B cell (primary cell): ENCODE measurements at regions of chr2 and their contacts with region 1.

Region 1: GRCh38 chr2:101419096-101419663 is 31.9 kb upstream of the CREG2 start:
- DNase-seq: peak; percentile 78
- ATAC-seq: peak; percentile 82
- H3K4me3 ChIP-seq: no peak overlapping the region
- H3K4me3 Mint-ChIP-seq: no peak overlapping the region
- H3K27ac ChIP-seq: no peak overlapping the region
- H3K27ac Mint-ChIP-seq: no peak overlapping the region
- H3K4me1 ChIP-seq: no peaks in the 10 kb centered on the region
- H3K4me1 Mint-ChIP-seq: no peaks in the 10 kb centered on the region
- H3K27me3 ChIP-seq: peaks cover 0 to 5% (median 0%) of the 10 kb centered on the region in 4 experiments
- H3K27me3 Mint-ChIP-seq: peaks cover 8% of the 10 kb centered on the region
- CTCF ChIP-seq: peak; percentile 88

Region 2: DNA sequence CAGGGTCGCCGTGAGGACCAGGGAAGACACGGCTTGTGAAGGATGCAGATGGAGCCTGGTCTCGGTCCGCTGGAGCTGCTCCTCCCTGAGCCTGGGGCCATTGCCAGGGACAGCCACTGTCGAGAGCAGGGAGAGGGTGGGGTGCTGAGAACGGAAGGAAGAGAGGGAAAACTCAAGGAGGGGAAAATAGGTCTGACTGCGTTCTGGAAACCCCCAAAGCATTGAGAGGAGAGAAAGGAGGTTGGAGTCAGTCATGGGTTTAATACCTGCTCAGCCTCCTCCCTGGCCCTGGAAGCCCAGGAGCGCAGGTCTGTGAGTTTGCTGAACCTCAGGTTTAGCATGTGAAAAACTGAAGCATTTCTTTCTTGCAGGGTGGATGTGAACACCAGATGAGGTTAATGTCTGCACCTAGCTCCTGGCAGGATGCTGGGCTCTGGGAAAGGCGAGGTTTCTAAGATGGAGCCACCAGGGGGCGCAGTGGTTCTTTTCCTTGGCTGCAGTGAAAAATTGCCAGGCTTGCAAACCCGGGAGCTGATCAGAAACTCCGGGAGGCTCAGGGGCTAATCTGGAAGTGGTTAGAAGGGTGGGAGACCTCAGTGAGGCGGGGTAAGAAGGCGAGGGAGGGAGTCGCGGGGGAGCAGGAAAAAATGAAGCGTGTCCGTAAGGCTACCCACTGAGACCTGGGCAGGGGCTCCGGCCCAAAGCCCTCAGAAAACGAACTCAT is 77.1 kb before region 1 on chr2:
- CTCF ChIA-PET with region 1: interaction called, 13 read pairs
- POLR2A ChIA-PET with region 1: no interaction called
- intact Hi-C with region 1: loop called (anchors 1 kb)
- DNase-seq: peak; percentile 73
- ATAC-seq: peak; percentile 56
- H3K4me3 ChIP-seq: no peak overlapping the region
- H3K4me3 Mint-ChIP-seq: no peak overlapping the region
- H3K27ac ChIP-seq: no peak overlapping the region
- H3K27ac Mint-ChIP-seq: no peak overlapping the region
- H3K4me1 ChIP-seq: peaks cover 0 to 8% of the 10 kb centered on the region in 2 donors
- H3K4me1 Mint-ChIP-seq: peaks cover 7% of the 10 kb centered on the region
- H3K27me3 ChIP-seq: no peaks in the 10 kb centered on the region
- H3K27me3 Mint-ChIP-seq: peaks cover 2% of the 10 kb centered on the region
- CTCF ChIP-seq: peak; percentile 90

Region 3: GRCh38 chr2:101371636-101372035 is 47.5 kb before region 1 on chr2:
- CTCF ChIA-PET with region 1: no interaction called
- POLR2A ChIA-PET with region 1: no interaction called
- intact Hi-C with region 1: no loop called
- DNase-seq: no peak
- ATAC-seq: no peak
- H3K4me3 ChIP-seq: no peak overlapping the region
- H3K4me3 Mint-ChIP-seq: no peak overlapping the region
- H3K27ac ChIP-seq: no peak overlapping the region
- H3K27ac Mint-ChIP-seq: no peak overlapping the region
- H3K4me1 ChIP-seq: no peaks in the 10 kb centered on the region
- H3K4me1 Mint-ChIP-seq: no peaks in the 10 kb centered on the region
- H3K27me3 ChIP-seq: no peaks in the 10 kb centered on the region
- H3K27me3 Mint-ChIP-seq: peaks cover 7% of the 10 kb centered on the region
- CTCF ChIP-seq: no peak

Region 4: GRCh38 chr2:101400048-101400447 is 19.1 kb before region 1 on chr2:
- CTCF ChIA-PET with region 1: interaction called, 23 read pairs
- POLR2A ChIA-PET with region 1: no interaction called
- intact Hi-C with region 1: no loop called
- DNase-seq: peak; percentile 60
- ATAC-seq: peak; percentile 40
- H3K4me3 ChIP-seq: peak overlapping the region in 1 of 5 experiments; percentile 23
- H3K4me3 Mint-ChIP-seq: peak overlapping the region; percentile 78
- H3K27ac ChIP-seq: peak overlapping the region in 1 of 2 donors; percentile 50
- H3K27ac Mint-ChIP-seq: peak overlapping the region; percentile 89
- H3K4me1 ChIP-seq: peaks cover 53 to 62% of the 10 kb centered on the region in 2 donors
- H3K4me1 Mint-ChIP-seq: peaks cover 52% of the 10 kb centered on the region
- H3K27me3 ChIP-seq: no peaks in the 10 kb centered on the region
- H3K27me3 Mint-ChIP-seq: peaks cover 8% of the 10 kb centered on the region
- CTCF ChIP-seq: no peak

Region 5: DNA sequence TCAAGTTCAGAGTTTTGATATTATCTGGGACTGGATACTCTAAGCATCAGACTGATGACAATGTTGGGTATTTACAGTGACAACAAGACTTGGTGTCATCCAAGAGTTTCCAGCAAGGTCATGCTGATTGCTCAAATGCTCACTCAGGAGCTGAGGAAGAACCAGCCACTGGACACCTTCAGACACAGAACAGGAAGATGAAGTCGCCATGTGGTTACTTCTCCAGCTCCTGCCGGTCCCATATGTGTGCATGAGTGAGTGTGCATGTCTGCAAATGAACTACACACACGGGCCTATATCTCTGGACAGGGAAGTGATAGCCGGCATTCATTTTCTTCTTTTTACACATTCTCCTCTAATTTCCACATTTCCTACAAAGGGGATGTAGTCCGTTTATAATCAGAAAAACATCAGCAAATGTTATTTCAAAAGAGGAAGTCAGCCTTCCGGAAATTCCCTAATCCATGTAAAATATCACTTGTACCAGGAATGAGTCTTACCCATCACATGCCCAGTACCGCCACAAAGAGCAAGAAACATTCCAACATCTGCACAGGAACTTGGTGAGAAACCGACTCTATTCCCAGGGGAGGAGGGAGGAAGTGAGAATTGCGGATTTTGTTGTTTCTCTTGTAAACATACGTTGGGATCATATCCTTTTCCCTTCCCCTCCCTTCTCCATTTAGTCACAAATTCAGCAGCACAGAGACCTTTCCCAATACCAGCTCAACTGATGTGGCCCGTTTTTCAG is 44.9 kb after region 1 on chr2:
- CTCF ChIA-PET with region 1: no interaction called
- POLR2A ChIA-PET with region 1: no interaction called
- intact Hi-C with region 1: no loop called
- DNase-seq: no peak
- ATAC-seq: no peak
- H3K4me3 ChIP-seq: no peak overlapping the region
- H3K4me3 Mint-ChIP-seq: no peak overlapping the region
- H3K27ac ChIP-seq: no peak overlapping the region
- H3K27ac Mint-ChIP-seq: no peak overlapping the region
- H3K4me1 ChIP-seq: no peaks in the 10 kb centered on the region
- H3K4me1 Mint-ChIP-seq: peaks cover 7% of the 10 kb centered on the region
- H3K27me3 ChIP-seq: peaks cover 0 to 10% (median 4%) of the 10 kb centered on the region in 4 experiments
- H3K27me3 Mint-ChIP-seq: peaks cover 37% of the 10 kb centered on the region
- CTCF ChIP-seq: no peak

Region 6: DNA sequence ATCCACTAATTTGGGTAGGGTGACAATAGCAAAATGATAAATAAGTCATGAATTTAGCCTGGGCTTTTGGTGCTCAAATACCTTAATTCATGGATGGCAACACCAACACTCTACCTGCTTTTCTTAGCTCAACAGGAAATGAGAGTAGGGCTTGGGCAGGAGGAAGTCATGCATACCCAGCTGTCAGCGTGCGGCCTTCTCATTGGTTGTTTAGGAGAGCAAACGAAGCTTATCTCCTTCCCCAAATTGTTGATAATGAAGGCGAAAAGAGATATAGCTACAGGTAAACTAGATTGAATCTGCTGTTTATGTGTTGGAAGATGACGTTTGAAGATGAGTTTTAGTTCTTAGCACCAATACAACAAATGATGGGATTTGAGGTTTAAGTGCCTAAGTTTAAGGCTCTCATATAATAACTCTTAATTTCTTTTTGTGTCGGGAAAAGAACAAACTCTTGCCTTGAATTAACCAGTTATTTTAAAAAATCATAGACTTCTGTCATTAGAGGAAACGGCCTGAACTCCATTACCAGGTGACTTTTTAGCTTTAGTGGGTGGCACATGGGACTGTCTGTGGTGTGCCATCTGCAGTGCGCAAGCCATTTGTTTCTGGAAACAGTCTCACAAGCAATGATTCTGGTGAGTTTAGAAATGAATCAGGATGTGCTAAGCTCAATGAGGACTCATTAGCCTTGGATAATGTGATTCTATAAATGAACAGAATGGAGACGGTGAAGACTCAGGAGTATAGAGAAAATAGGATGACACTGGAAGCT is 298.1 kb after region 1 on chr2:
- CTCF ChIA-PET with region 1: interaction called, 12 read pairs
- POLR2A ChIA-PET with region 1: no interaction called
- intact Hi-C with region 1: no loop called
- DNase-seq: peak; percentile 93
- ATAC-seq: peak; percentile 85
- H3K4me3 ChIP-seq: peak overlapping the region in 4 of 5 experiments; percentile 5 to 52 (median 19)
- H3K4me3 Mint-ChIP-seq: peak overlapping the region; percentile 83
- H3K27ac ChIP-seq: peak overlapping the region; percentile 94 to 99
- H3K27ac Mint-ChIP-seq: peak overlapping the region; percentile 96
- H3K4me1 ChIP-seq: peaks cover 92 to 93% of the 10 kb centered on the region in 2 donors
- H3K4me1 Mint-ChIP-seq: peaks cover 83% of the 10 kb centered on the region
- H3K27me3 ChIP-seq: no peaks in the 10 kb centered on the region
- H3K27me3 Mint-ChIP-seq: no peaks in the 10 kb centered on the region
- CTCF ChIP-seq: no peak

Region 7: DNA sequence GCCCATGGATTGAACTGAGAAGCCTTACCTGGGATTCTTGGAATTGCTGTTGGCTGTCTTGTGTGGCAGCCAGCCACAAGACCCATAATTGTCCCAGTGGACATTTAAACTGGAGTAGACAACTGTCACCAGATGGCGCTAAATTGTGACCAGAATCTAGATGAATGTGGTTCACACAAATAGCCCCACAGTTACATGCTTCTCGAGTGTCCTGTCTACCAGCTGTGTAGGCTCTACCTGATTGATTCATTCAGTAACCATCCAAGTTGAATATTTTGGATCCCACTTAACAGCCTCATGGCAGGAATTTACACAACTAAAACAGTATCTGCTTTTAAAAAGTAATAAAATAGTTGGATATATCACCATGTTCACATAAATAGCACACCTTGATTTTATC is 351.5 kb after region 1 on chr2:
- CTCF ChIA-PET with region 1: interaction called, 11 read pairs
- POLR2A ChIA-PET with region 1: no interaction called
- intact Hi-C with region 1: no loop called
- DNase-seq: peak; percentile 59
- ATAC-seq: no peak
- H3K4me3 ChIP-seq: no peak overlapping the region
- H3K4me3 Mint-ChIP-seq: peak overlapping the region; percentile 30
- H3K27ac ChIP-seq: no peak overlapping the region
- H3K27ac Mint-ChIP-seq: peak overlapping the region; percentile 73
- H3K4me1 ChIP-seq: peaks cover 70 to 82% of the 10 kb centered on the region in 2 donors
- H3K4me1 Mint-ChIP-seq: peaks cover 91% of the 10 kb centered on the region
- H3K27me3 ChIP-seq: no peaks in the 10 kb centered on the region
- H3K27me3 Mint-ChIP-seq: no peaks in the 10 kb centered on the region
- CTCF ChIP-seq: peak; percentile 60

Region 8: GRCh38 chr2:101831351-101831865 is 412.2 kb after region 1 on chr2:
- CTCF ChIA-PET with region 1: interaction called, 288 read pairs
- POLR2A ChIA-PET with region 1: no interaction called
- intact Hi-C with region 1: loop called (anchors 1 kb)
- DNase-seq: peak; percentile 75
- ATAC-seq: peak; percentile 86
- H3K4me3 ChIP-seq: no peak overlapping the region
- H3K4me3 Mint-ChIP-seq: no peak overlapping the region
- H3K27ac ChIP-seq: no peak overlapping the region
- H3K27ac Mint-ChIP-seq: peak overlapping the region; percentile 33
- H3K4me1 ChIP-seq: peaks cover 18 to 26% of the 10 kb centered on the region in 2 donors
- H3K4me1 Mint-ChIP-seq: peaks cover 52% of the 10 kb centered on the region
- H3K27me3 ChIP-seq: no peaks in the 10 kb centered on the region
- H3K27me3 Mint-ChIP-seq: no peaks in the 10 kb centered on the region
- CTCF ChIP-seq: peak; percentile 73

Region 9: DNA sequence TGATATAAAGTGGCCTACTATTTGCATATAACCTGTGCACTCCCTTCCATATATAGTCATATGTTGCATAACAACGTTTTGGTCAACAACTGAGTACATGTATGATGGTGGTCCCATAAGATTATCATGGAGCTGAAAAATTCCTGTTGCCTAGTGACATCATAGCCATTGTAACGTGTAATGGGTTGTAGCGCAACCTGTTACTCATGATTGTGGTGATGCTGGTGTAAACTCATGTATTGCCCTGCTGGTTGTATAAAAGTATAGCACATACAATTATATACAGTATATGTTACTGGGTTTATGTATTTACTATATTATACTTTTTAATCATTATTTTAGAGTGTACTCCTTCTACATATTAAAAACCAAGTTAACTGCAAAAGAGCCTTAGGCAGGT is 427.8 kb after region 1 on chr2:
- CTCF ChIA-PET with region 1: interaction called, 17 read pairs
- POLR2A ChIA-PET with region 1: no interaction called
- intact Hi-C with region 1: no loop called
- DNase-seq: no peak
- ATAC-seq: no peak
- H3K4me3 ChIP-seq: no peak overlapping the region
- H3K4me3 Mint-ChIP-seq: no peak overlapping the region
- H3K27ac ChIP-seq: no peak overlapping the region
- H3K27ac Mint-ChIP-seq: no peak overlapping the region
- H3K4me1 ChIP-seq: peaks cover 0 to 4% of the 10 kb centered on the region in 2 donors
- H3K4me1 Mint-ChIP-seq: peaks cover 7% of the 10 kb centered on the region
- H3K27me3 ChIP-seq: no peaks in the 10 kb centered on the region
- H3K27me3 Mint-ChIP-seq: no peaks in the 10 kb centered on the region
- CTCF ChIP-seq: no peak